ENCODE measurements at regions of chr6 and their contacts with region 1.

Region 1: GRCh38 chr6:149846321-149846720 is 17.8 kb downstream of the LRP11 start:
- DNase-seq: no peak
- ATAC-seq: no peak
- H3K4me3 ChIP-seq: no peak overlapping the region
- H3K27ac ChIP-seq: no peak overlapping the region
- H3K4me1 ChIP-seq: peaks cover 23% of the 10 kb centered on the region
- H3K27me3 ChIP-seq: no peaks in the 10 kb centered on the region
- CTCF ChIP-seq: no peak
- EP300 ChIP-seq: no peak
- POLR2A ChIP-seq: no peak
- RAD21 ChIP-seq: no peak

Region 2: DNA sequence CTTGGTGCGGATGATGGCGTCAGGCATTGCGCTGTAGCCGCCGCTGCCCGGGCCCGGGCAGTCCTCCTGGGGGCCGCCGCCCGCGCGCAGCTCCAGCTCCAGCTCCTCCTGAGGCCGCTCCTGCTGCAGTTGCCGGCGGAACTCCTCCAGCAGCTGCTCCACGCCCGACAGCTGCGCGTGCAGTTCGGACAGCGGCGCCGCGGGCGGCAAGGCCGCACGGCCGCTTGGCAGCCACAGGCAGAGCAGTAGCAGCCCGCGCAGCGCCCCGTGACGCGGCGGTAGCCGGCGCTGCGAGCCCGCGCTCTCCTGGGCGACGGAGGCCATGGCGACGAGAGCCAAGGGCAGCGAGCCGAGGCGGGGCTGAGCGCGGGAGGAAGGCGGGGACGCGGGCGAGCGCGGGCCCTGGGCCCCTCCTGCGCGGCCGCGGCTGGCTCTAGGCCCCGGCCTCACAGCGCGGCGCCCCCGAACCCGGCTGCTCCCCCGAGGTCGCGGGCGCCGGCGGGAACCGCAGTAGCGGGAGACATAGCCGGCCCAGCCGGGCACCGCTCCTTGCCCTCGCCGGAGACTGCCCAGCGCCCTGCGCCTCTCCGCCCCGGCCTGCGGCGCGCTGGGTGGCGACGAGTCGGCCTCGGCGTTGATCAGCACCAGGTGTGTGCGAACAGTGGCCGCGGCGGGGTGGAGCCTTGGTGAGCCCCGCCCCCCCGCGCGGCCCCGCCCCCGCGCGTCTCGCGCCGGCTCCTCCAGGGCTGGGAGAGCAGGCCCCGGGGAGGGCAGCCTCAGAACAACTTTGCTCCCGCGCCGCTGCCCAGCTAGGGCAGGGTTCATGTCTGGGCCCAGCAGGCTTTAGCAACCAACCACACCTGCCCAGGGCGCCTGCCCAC is 17.6 kb after region 1 on chr6 and contains the start of gene LRP11:
- CTCF ChIA-PET with region 1: interaction called, 37 read pairs
- POLR2A ChIA-PET with region 1: interaction called, 56 read pairs
- in situ Hi-C with region 1: no loop called
- intact Hi-C with region 1: loop called (anchors 1 kb)
- DNase-seq: peak; percentile 82
- ATAC-seq: peak; percentile 73
- H3K4me3 ChIP-seq: peak within 1 kb of the TSS; percentile 66 to 93 (median 83)
- H3K27ac ChIP-seq: peak within 1 kb of the TSS; percentile 87
- H3K4me1 ChIP-seq: peaks cover 63% of the 10 kb centered on the region
- H3K27me3 ChIP-seq: no peaks in the 10 kb centered on the region; a peak in 1 of 5 replicates
- CTCF ChIP-seq: no peak; the same call in 1 of the 2 replicates
- EP300 ChIP-seq: no peak; a peak in 1 of 4 replicates
- POLR2A ChIP-seq: peak in 1 of 2 experiments; percentile 88; a peak in 2 of 4 replicates
- RAD21 ChIP-seq: peak; percentile 62
- total RNA-seq, gene LRP11: 32.1 and 48.9 TPM in 2 replicates

Region 3: DNA sequence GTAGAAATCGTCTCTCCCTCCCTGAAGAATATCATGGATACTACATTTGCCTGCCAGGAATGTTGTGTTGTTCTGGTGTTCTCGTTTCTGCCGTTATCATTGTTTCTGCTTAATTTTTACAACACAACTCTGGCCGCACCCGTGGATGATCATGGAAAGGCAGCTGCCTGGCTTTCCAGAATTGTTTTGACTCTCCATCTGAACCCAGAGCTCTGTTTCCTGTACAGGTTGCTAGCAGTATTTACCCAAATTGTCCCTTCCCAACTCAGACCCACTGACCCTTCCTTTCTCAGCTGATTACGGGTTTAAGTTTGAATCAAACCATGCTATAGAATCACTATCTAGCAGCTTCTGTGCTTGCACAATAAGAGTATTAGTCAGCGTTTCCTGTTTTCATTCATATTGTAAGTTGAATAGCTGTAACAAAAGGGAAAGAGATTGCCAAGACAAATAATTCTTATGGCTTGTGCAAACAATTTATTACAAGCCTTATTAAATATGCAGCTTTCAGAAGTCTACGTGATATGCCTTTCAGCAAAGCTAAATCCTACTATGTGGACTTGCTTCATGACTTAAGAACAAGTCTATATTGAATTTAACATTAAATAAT is 1158.2 kb after region 1 on chr6:
- CTCF ChIA-PET with region 1: no interaction called
- POLR2A ChIA-PET with region 1: no interaction called
- in situ Hi-C with region 1: no loop called
- intact Hi-C with region 1: no loop called
- DNase-seq: peak; percentile 59
- ATAC-seq: no peak
- H3K4me3 ChIP-seq: no peak overlapping the region
- H3K27ac ChIP-seq: no peak overlapping the region
- H3K4me1 ChIP-seq: peaks cover 12% of the 10 kb centered on the region
- H3K27me3 ChIP-seq: no peaks in the 10 kb centered on the region
- CTCF ChIP-seq: no peak
- EP300 ChIP-seq: no peak; a peak in 1 of 4 replicates
- POLR2A ChIP-seq: no peak
- RAD21 ChIP-seq: no peak